H1 (cell line): ENCODE measurements at regions of chr2 and their contacts with region 1.

Region 1: GRCh38 chr2:157336137-157337010 is 10.8 kb upstream of the ERMN start:
- DNase-seq: peak in 1 of 2 experiments; percentile 54
- H3K4me3 ChIP-seq: no peak overlapping the region
- H3K27ac ChIP-seq: no peak overlapping the region
- H3K4me1 ChIP-seq: peaks cover 0 to 4% (median 0%) of the 10 kb centered on the region in 4 experiments; a peak in 1 of 7 replicates
- H3K27me3 ChIP-seq: no peaks in the 10 kb centered on the region
- CTCF ChIP-seq: peak in 2 of 3 experiments; percentile 54 to 62; a peak in 3 of 4 replicates
- EP300 ChIP-seq: no peak
- POLR2A ChIP-seq: no peak
- RAD21 ChIP-seq: peak; percentile 38 to 40

Region 2: GRCh38 chr2:157107877-157108276 is 228.5 kb before region 1 on chr2:
- CTCF ChIA-PET with region 1: no interaction called
- POLR2A ChIA-PET with region 1: no interaction called
- DNase-seq: no peak
- H3K4me3 ChIP-seq: no peak overlapping the region
- H3K27ac ChIP-seq: no peak overlapping the region
- H3K4me1 ChIP-seq: no peaks in the 10 kb centered on the region
- H3K27me3 ChIP-seq: no peaks in the 10 kb centered on the region
- CTCF ChIP-seq: no peak
- EP300 ChIP-seq: no peak
- POLR2A ChIP-seq: no peak
- RAD21 ChIP-seq: no peak

Region 3: DNA sequence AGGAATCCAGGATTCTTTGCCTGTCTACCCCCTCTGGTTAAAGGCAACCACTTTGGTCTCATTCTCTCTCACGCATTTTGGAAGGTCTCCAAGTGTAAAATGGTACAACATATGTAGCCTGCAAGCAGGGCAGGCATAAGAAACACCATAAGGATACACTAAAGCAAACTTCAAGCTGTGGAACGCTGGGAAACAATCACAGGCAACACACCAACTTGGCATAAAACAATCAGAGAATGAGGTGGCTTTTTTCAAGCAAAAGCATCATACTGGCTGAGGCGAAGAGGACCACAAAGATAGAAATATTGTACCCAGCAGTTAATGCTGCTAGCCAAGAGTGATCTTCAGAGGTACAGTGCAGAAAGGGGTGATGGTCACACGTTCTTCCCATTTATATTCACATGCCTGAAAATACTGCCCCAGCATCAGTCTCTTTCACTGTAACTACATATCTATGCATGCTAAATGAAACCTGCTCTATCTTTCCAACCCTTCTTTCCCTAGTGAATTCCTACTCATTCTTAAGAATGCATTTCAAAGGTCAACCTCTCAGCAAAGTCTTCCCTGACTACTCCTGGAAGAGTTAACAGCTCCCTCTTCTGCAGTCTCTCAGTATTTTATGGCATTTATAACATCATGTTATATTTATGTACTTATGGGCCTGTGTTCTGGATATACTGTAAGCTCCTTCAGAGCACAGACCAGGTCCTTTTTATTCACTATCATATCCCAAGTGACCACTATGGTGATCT is 150.7 kb before region 1 on chr2:
- CTCF ChIA-PET with region 1: no interaction called
- POLR2A ChIA-PET with region 1: no interaction called
- DNase-seq: no peak
- H3K4me3 ChIP-seq: no peak overlapping the region
- H3K27ac ChIP-seq: no peak overlapping the region
- H3K4me1 ChIP-seq: no peaks in the 10 kb centered on the region
- H3K27me3 ChIP-seq: no peaks in the 10 kb centered on the region
- CTCF ChIP-seq: no peak
- EP300 ChIP-seq: no peak
- POLR2A ChIP-seq: no peak
- RAD21 ChIP-seq: no peak

Region 4: GRCh38 chr2:157233506-157233905 is 102.9 kb before region 1 on chr2:
- CTCF ChIA-PET with region 1: no interaction called
- POLR2A ChIA-PET with region 1: no interaction called
- DNase-seq: no peak
- H3K4me3 ChIP-seq: no peak overlapping the region
- H3K27ac ChIP-seq: no peak overlapping the region
- H3K4me1 ChIP-seq: no peaks in the 10 kb centered on the region
- H3K27me3 ChIP-seq: no peaks in the 10 kb centered on the region
- CTCF ChIP-seq: no peak
- EP300 ChIP-seq: no peak
- POLR2A ChIP-seq: no peak
- RAD21 ChIP-seq: no peak

Region 5: GRCh38 chr2:157321466-157321865 is 14.9 kb before region 1 on chr2:
- CTCF ChIA-PET with region 1: interaction called, 44 read pairs
- POLR2A ChIA-PET with region 1: no interaction called
- DNase-seq: no peak
- H3K4me3 ChIP-seq: no peak overlapping the region
- H3K27ac ChIP-seq: no peak overlapping the region
- H3K4me1 ChIP-seq: peaks cover 0 to 8% (median 5%) of the 10 kb centered on the region in 4 experiments; a peak in 6 of 7 replicates
- H3K27me3 ChIP-seq: no peaks in the 10 kb centered on the region
- CTCF ChIP-seq: no peak
- EP300 ChIP-seq: no peak
- POLR2A ChIP-seq: no peak
- RAD21 ChIP-seq: no peak

Region 6: DNA sequence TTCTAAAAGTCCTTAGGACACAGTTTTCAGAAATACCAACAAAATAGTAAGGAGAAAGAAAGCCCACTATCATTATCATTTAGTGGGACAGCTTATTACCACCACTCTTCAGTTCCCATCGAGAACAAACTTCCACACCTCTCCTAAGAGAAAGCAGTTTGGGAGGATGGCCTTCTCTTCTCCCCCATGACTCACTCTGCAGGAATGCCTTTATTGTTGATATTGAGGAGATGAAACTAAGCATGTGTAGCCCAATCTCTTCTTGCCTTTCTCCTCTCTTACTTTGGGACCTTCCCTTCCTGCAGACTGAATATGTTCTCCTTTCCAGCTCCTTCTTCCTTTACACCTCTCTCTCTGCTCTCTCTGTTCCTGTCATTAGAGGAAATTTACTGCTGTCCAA is 19.2 kb after region 1 on chr2:
- CTCF ChIA-PET with region 1: interaction called, 26 read pairs
- POLR2A ChIA-PET with region 1: no interaction called
- DNase-seq: no peak
- H3K4me3 ChIP-seq: no peak overlapping the region
- H3K27ac ChIP-seq: no peak overlapping the region
- H3K4me1 ChIP-seq: no peaks in the 10 kb centered on the region
- H3K27me3 ChIP-seq: peaks cover 0 to 1% (median 0%) of the 10 kb centered on the region in 4 experiments; a peak in 1 of 7 replicates
- CTCF ChIP-seq: no peak
- EP300 ChIP-seq: no peak
- POLR2A ChIP-seq: no peak
- RAD21 ChIP-seq: no peak

Region 7: DNA sequence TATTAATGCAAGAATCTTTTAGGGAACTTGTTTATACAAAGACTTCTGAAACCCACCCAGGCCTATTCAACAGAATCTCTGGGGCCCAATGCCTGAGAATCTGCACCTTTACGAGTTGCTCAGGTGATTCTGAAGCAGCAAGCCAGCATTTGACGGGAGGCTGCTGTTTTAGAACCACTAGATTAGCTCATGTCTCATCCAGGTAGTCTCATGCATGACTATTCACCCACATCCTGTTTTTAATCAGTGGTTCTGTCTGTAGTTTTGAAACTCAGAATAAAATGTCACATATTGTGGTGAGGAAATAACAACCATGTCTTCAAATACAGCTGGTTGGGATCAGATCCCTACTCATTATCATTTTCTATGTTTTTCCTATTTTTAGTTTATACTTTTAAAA is 68.0 kb after region 1 on chr2:
- CTCF ChIA-PET with region 1: interaction called, 11 read pairs
- POLR2A ChIA-PET with region 1: no interaction called
- DNase-seq: no peak
- H3K4me3 ChIP-seq: no peak overlapping the region
- H3K27ac ChIP-seq: no peak overlapping the region
- H3K4me1 ChIP-seq: no peaks in the 10 kb centered on the region
- H3K27me3 ChIP-seq: no peaks in the 10 kb centered on the region
- CTCF ChIP-seq: no peak
- EP300 ChIP-seq: no peak
- POLR2A ChIP-seq: no peak
- RAD21 ChIP-seq: no peak

Region 8: GRCh38 chr2:157500334-157500733 is 164.0 kb after region 1 on chr2:
- CTCF ChIA-PET with region 1: no interaction called
- POLR2A ChIA-PET with region 1: no interaction called
- DNase-seq: no peak
- H3K4me3 ChIP-seq: no peak overlapping the region
- H3K27ac ChIP-seq: no peak overlapping the region
- H3K4me1 ChIP-seq: no peaks in the 10 kb centered on the region
- H3K27me3 ChIP-seq: no peaks in the 10 kb centered on the region
- CTCF ChIP-seq: no peak
- EP300 ChIP-seq: no peak
- POLR2A ChIP-seq: no peak
- RAD21 ChIP-seq: no peak